Cardiac septum (tissue), 1 donor: ENCODE measurements at regions of chr9 and their contacts with region 1.

Region 1: DNA sequence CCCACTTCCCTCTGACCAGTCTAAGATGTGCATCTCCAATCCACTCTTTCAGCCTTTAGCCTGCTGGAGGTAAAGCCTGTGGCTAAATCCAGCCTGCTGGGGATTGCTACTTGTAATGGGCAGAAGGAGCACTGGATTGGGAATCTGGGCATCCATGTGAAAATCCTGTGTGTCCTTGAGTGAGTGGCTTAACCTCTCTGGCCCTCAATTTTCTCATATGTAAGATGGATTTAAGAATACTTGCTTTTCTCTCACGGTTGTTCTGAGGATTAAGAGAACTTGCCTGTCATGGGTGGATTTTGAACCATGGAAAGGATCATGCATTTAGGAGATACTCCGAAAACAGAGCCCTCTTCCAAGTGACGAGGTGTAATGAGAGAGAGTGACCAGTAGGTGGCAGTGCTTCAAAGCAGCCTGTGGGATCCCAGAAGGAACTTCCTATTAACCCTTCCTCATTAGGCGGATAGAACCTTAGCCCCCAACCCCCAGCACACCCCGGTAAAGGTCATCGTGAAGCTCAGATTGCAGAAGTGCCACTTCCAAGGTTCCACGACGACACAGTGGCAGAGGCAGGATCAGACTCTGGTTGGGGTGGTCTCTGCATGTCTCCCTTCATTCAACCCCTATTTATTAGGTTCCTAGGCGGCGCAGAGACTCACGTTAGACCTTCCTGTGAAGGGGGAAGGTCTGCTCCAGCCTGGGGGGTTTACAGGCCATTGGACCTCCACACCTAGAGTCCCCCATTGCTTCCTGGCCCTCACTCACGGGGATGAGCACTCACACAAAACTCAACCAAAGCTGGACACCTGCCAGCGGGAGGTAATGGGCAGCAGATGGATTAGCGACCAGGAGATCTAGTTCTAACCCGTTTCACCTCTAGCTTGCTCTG is 68.7 kb upstream of the ZNF618 start:
- DNase-seq: no peak

Region 2: GRCh38 chr9:113541019-113541900 is 266.2 kb before region 1 on chr9:
- intact Hi-C with region 1: no loop called
- DNase-seq: peak; percentile 78

Region 3: GRCh38 chr9:113823421-113823820 is 16.0 kb after region 1 on chr9:
- intact Hi-C with region 1: no loop called
- DNase-seq: no peak

Region 4: DNA sequence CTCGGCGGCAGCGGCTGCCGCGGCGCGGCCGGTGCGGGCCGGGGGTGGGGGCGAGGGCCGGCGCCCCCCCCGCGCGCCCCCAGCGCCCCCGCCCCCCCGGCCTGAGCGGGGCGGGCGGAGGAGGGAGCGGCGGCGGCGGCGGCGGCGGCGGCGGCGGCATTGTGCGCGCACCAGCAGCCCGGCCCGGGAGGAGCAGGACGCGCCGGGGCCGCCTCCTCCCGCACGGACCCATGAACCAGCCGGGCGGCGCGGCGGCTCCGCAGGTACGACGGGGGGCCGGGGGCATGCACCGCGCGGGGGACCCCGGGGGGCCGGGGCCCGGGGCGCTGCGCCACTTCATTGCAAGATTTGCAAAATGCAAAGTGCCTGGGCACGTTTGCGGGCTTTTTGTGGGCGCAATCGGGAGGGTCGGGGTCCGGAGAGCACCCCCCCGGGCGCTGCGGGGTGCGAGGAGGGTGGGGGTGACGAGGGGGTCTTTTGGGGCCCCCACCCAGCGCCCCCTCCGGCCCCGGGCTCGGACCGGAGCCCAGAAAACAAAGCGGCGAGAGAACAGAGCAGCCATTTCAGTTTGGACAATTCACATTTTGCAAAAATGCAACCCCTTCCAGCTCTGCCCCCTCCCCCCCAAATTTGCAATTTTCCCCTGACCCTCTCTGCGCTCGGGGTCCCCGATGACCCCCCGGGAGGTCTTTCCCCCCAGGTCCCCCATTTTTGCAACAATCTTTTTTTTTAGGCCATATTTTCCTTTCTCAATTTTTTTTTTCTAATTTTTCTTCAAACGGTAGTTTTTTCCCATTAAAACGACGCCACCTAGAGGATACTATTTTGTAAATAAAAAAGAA is 69.0 kb after region 1 on chr9 and contains the start of gene ZNF618:
- intact Hi-C with region 1: loop called (anchors 5 kb)
- DNase-seq: no peak
- total RNA-seq, gene ZNF618: 1.7 TPM

Region 5: DNA sequence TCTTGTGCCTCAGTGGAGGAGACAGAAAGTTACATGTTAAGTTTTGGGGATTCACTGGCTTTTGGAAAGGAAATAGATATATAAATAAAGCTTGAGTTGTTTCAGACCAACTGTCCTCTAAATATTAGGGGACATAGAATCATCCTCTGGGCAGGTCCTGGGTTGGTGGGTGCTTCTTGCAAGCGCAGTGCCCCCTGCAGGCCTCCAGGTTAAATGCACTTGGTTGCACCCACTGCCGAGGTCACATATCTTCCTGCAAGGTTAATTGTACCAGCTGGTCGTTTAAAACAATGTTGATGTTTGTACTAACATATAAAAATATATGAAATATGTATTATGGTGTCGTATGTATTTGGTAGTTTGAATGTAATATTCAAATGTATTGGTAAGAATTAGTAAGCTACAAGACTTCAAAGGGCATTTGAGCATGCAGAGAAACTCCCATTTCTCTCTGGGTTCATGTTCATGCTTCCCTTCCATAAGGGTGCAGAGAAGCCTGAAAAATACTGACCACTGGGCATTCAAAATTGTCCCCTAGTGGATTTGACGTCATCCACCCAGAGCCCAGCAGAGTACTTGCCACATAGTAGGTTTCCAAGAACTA is 155.7 kb after region 1 on chr9:
- intact Hi-C with region 1: loop called (anchors 10 kb)
- DNase-seq: peak; percentile 73